CD4-positive, alpha-beta memory T cell (primary cell): ENCODE measurements at regions of chr7 and their contacts with region 1.

Region 1: DNA sequence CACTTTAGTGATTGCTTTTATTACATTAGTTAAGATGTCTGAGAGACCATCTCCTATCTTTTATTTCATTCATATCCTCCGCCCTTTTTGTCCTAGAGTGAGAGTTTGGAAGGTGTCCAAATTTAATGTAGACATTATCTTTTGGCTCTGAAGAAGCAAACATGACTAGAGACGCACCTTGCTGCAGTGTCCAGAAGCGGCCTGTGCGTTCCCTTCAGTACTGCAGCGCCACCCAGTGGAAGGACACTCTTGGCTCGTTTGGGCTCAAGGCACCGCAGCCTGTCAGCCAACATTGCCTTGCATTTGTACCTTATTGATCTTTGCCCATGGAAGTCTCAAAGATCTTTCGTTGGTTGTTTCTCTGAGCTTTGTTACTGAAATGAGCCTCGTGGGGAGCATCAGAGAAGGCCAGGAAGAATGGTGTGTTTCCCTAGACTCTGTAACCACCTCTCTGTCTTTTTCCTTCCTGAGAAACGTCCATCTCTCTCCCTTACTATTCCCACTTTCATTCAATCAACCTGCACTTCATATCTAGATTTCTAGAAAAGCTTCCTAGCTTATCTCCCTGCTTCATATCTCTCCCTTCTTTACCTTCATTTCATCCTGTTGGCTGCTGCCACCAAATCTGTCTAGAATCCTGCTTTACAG is 10.4 kb upstream of the CLCN1 start:
- DNase-seq: peak; percentile 49 to 65 (median 62)
- H3K4me3 ChIP-seq: no peak overlapping the region
- H3K4me3 Mint-ChIP-seq: no peak overlapping the region
- H3K27ac ChIP-seq: no peak overlapping the region
- H3K27ac Mint-ChIP-seq: peak overlapping the region; percentile 28 to 86 (median 59)
- H3K4me1 ChIP-seq: peaks cover 13% of the 10 kb centered on the region
- H3K4me1 Mint-ChIP-seq: peaks cover 21 to 44% (median 37%) of the 10 kb centered on the region in 4 donors
- H3K27me3 ChIP-seq: no peaks in the 10 kb centered on the region
- H3K27me3 Mint-ChIP-seq: no peaks in the 10 kb centered on the region

Region 2: DNA sequence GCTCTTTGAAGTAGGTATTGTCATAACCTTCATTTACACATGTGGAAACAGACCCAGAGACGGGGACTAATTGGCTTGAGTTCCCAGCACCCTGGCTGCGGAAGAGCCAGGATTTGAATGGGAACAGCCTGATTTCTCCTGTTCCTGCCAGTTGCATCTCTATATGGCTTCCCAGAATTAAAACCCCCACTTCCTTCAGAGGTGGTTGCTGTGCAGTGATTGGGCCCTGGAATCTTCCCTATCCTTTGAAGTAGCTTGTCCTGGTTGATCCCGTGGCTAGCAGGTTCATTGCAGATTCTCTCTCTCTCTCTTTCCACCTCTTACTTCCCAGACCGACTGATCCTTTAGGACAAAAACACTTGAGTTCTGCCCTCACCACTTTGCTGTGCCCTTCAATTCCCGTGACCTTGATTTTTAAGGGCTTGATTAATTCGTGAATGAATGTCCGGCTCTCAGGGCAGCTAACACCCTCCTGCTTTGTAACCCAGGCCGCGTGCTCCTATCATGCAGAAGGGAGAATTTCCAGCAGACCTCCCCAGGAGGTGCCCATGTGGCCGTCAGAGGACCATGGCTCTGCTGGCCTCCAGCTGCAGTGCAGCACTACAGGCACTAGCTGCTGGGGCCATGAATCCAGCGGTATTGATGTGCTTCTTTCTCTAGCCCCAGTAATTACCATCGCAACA is 1875.0 kb before region 1 on chr7:
- CTCF ChIA-PET with region 1: no interaction called
- POLR2A ChIA-PET with region 1: no interaction called
- intact Hi-C with region 1: no loop called
- DNase-seq: no peak
- H3K4me3 ChIP-seq: no peak overlapping the region
- H3K4me3 Mint-ChIP-seq: no peak overlapping the region
- H3K27ac ChIP-seq: no peak overlapping the region
- H3K27ac Mint-ChIP-seq: no peak overlapping the region
- H3K4me1 ChIP-seq: no peaks in the 10 kb centered on the region
- H3K4me1 Mint-ChIP-seq: no peaks in the 10 kb centered on the region
- H3K27me3 ChIP-seq: no peaks in the 10 kb centered on the region
- H3K27me3 Mint-ChIP-seq: peaks cover 4 to 14% of the 10 kb centered on the region in 2 donors

Region 3: GRCh38 chr7:143248761-143249354 is 56.7 kb before region 1 on chr7:
- CTCF ChIA-PET with region 1: interaction called, 513 read pairs
- POLR2A ChIA-PET with region 1: no interaction called
- intact Hi-C with region 1: no loop called
- DNase-seq: no peak
- H3K4me3 ChIP-seq: no peak overlapping the region
- H3K4me3 Mint-ChIP-seq: peak overlapping the region in 7 of 8 donors; percentile 25 to 67 (median 47)
- H3K27ac ChIP-seq: no peak overlapping the region
- H3K27ac Mint-ChIP-seq: peak overlapping the region; percentile 24 to 90 (median 70)
- H3K4me1 ChIP-seq: peaks cover 93% of the 10 kb centered on the region
- H3K4me1 Mint-ChIP-seq: peaks cover 73 to 98% (median 84%) of the 10 kb centered on the region in 4 donors
- H3K27me3 ChIP-seq: no peaks in the 10 kb centered on the region
- H3K27me3 Mint-ChIP-seq: no peaks in the 10 kb centered on the region

Region 4: DNA sequence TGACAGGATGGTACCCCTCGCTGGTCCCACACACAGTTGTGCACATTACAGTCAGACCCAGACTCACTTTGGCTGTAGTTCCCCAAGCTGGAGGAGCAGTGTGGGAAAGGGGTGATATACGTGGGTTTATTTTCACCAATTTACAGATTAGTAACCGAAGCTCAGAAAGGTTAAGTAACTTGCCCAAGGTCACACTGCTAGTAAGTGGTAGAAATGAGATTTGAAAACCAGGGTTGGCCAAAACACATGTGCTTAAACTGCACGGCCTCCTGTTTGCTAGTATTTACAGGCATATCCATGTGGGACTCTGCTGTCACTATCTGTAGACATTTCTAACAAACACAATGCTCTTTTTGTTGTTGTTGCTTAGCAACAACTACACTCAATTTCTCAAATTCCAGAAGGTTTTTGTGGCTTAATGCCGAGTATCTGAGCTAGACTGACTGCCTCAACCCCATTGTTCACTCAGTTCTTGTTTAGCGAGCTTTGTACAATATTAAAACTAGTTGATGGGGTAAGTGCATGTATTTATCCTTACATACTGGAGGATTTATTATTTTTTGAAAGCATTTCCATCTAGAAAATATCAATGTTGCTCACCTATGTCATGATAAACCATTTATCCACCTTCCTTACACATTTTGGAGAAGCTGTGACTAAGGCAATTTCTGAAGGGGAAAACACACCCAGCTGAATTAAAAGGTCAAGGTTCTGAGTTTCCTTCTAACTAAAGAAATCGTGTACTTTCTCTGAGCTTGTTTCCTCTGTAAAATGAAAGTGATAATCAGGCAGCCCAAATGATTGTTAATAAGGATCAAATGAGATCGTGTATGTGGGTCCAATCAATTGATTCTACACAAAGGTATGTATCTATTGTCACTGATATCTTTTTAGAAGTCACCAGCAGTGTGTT is 26.1 kb before region 1 on chr7:
- CTCF ChIA-PET with region 1: interaction called, 22 read pairs
- POLR2A ChIA-PET with region 1: interaction called, 8 read pairs
- intact Hi-C with region 1: no loop called
- DNase-seq: peak; percentile 52 to 74 (median 60)
- H3K4me3 ChIP-seq: peak overlapping the region; percentile 1 to 48
- H3K4me3 Mint-ChIP-seq: peak overlapping the region; percentile 61 to 89 (median 81)
- H3K27ac ChIP-seq: peak overlapping the region; percentile 74
- H3K27ac Mint-ChIP-seq: peak overlapping the region; percentile 83 to 97 (median 94)
- H3K4me1 ChIP-seq: peaks cover 33% of the 10 kb centered on the region
- H3K4me1 Mint-ChIP-seq: peaks cover 34 to 40% (median 37%) of the 10 kb centered on the region in 4 donors
- H3K27me3 ChIP-seq: no peaks in the 10 kb centered on the region
- H3K27me3 Mint-ChIP-seq: no peaks in the 10 kb centered on the region

Region 5: GRCh38 chr7:143287935-143288826 is 17.4 kb before region 1 on chr7 and contains the start of gene CASP2:
- CTCF ChIA-PET with region 1: interaction called, 28 read pairs
- POLR2A ChIA-PET with region 1: interaction called, 23 read pairs
- intact Hi-C with region 1: loop called (anchors 2 kb)
- DNase-seq: peak; percentile 99 to 100 (median 99)
- H3K4me3 ChIP-seq: peak within 1 kb of the TSS; percentile 82 to 92
- H3K4me3 Mint-ChIP-seq: peak within 1 kb of the TSS; percentile 92 to 99 (median 96)
- H3K27ac ChIP-seq: peak within 1 kb of the TSS; percentile 78
- H3K27ac Mint-ChIP-seq: peak within 1 kb of the TSS; percentile 83 to 98 (median 95)
- H3K4me1 ChIP-seq: peaks cover 44% of the 10 kb centered on the region
- H3K4me1 Mint-ChIP-seq: peaks cover 39 to 75% (median 57%) of the 10 kb centered on the region in 4 donors
- H3K27me3 ChIP-seq: no peaks in the 10 kb centered on the region
- H3K27me3 Mint-ChIP-seq: no peaks in the 10 kb centered on the region
- total RNA-seq, gene CASP2: 94.3 to 96.1 TPM

Region 6: GRCh38 chr7:143345428-143345900 is 39.9 kb after region 1 on chr7:
- CTCF ChIA-PET with region 1: interaction called, 10 read pairs
- POLR2A ChIA-PET with region 1: no interaction called
- intact Hi-C with region 1: no loop called
- DNase-seq: peak; percentile 52 to 64 (median 58)
- H3K4me3 ChIP-seq: no peak overlapping the region
- H3K4me3 Mint-ChIP-seq: peak overlapping the region; percentile 74 to 87 (median 80)
- H3K27ac ChIP-seq: no peak overlapping the region
- H3K27ac Mint-ChIP-seq: peak overlapping the region in 4 of 7 donors; percentile 55 to 70 (median 68)
- H3K4me1 ChIP-seq: peaks cover 4% of the 10 kb centered on the region
- H3K4me1 Mint-ChIP-seq: peaks cover 5 to 9% (median 7%) of the 10 kb centered on the region in 4 donors
- H3K27me3 ChIP-seq: no peaks in the 10 kb centered on the region
- H3K27me3 Mint-ChIP-seq: peaks cover 0 to 6% of the 10 kb centered on the region in 2 donors

Region 7: GRCh38 chr7:143408686-143409561 is 103.4 kb after region 1 on chr7 and contains the start of gene EPHA1:
- CTCF ChIA-PET with region 1: interaction called, 9 read pairs
- POLR2A ChIA-PET with region 1: interaction called, 5 read pairs
- intact Hi-C with region 1: loop called (anchors 2 kb)
- DNase-seq: peak; percentile 52 to 62 (median 57)
- H3K4me3 ChIP-seq: peak within 1 kb of the TSS; percentile 58 to 66
- H3K4me3 Mint-ChIP-seq: peak within 1 kb of the TSS; percentile 89 to 97 (median 92)
- H3K27ac ChIP-seq: peak within 1 kb of the TSS; percentile 15
- H3K27ac Mint-ChIP-seq: peak within 1 kb of the TSS; percentile 76 to 96 (median 96)
- H3K4me1 ChIP-seq: peaks cover 48% of the 10 kb centered on the region
- H3K4me1 Mint-ChIP-seq: peaks cover 47 to 73% (median 55%) of the 10 kb centered on the region in 4 donors
- H3K27me3 ChIP-seq: no peaks in the 10 kb centered on the region
- H3K27me3 Mint-ChIP-seq: no peaks in the 10 kb centered on the region
- total RNA-seq, gene EPHA1: 30.7 to 34.4 TPM

Region 8: GRCh38 chr7:143416565-143417149 is 111.1 kb after region 1 on chr7:
- CTCF ChIA-PET with region 1: interaction called, 33 read pairs
- POLR2A ChIA-PET with region 1: no interaction called
- intact Hi-C with region 1: loop called (anchors 1 kb)
- DNase-seq: peak in 4 of 5 donors; percentile 47 to 62 (median 53)
- H3K4me3 ChIP-seq: no peak overlapping the region
- H3K4me3 Mint-ChIP-seq: no peak overlapping the region
- H3K27ac ChIP-seq: no peak overlapping the region
- H3K27ac Mint-ChIP-seq: no peak overlapping the region
- H3K4me1 ChIP-seq: no peaks in the 10 kb centered on the region
- H3K4me1 Mint-ChIP-seq: peaks cover 0 to 9% (median 8%) of the 10 kb centered on the region in 4 donors
- H3K27me3 ChIP-seq: no peaks in the 10 kb centered on the region
- H3K27me3 Mint-ChIP-seq: no peaks in the 10 kb centered on the region